Heart right ventricle (tissue), 16 donors: ENCODE measurements at regions of chr9 and their contacts with region 1.

Region 1: DNA sequence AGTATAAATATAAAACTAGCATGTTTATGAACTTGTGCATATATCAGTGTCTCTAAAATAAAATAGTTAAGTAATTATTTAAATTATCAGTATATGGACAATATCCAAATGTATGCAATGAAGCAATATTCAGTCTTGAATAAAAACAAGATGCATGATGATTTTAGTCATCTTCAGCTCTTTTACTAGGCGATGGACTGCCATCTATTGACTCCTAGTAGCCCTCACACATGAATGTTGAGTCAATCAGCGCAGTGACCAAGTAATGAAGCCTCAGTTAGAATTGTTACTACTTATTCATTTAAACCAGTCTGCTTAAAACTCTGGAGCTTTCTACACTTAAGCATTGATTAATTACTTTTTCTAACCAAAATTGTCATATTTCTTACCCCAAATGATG is 92.9 kb upstream of the GRHPR start:
- DNase-seq: no peak
- ATAC-seq: no peak
- H3K4me3 ChIP-seq: no peak overlapping the region
- H3K27ac ChIP-seq: no peak overlapping the region
- H3K4me1 ChIP-seq: peaks cover 0 to 7% (median 0%) of the 10 kb centered on the region in 9 donors
- H3K27me3 ChIP-seq: no peaks in the 10 kb centered on the region
- CTCF ChIP-seq: peak in 7 of 9 donors; percentile 12 to 54 (median 44)

Region 2: GRCh38 chr9:36873247-36873875 is 456.2 kb before region 1 on chr9:
- intact Hi-C with region 1: loop called in 1 of 10 experiments (anchors 10 kb)
- DNase-seq: peak; percentile 45 to 56
- ATAC-seq: peak in 7 of 8 donors; percentile 66 to 81 (median 76)
- H3K4me3 ChIP-seq: no peak overlapping the region
- H3K27ac ChIP-seq: no peak overlapping the region
- H3K4me1 ChIP-seq: no peaks in the 10 kb centered on the region
- H3K27me3 ChIP-seq: peaks cover 4 to 48% (median 21%) of the 10 kb centered on the region in 7 donors
- CTCF ChIP-seq: peak; percentile 62 to 92 (median 85)

Region 3: GRCh38 chr9:37309136-37309535 is 20.4 kb before region 1 on chr9:
- intact Hi-C with region 1: loop called in 1 of 10 experiments (anchors 1 kb)
- DNase-seq: no peak
- ATAC-seq: no peak
- H3K4me3 ChIP-seq: no peak overlapping the region
- H3K27ac ChIP-seq: no peak overlapping the region
- H3K4me1 ChIP-seq: no peaks in the 10 kb centered on the region
- H3K27me3 ChIP-seq: no peaks in the 10 kb centered on the region
- CTCF ChIP-seq: peak in 3 of 9 donors; percentile 20 to 26 (median 22)

Region 4: DNA sequence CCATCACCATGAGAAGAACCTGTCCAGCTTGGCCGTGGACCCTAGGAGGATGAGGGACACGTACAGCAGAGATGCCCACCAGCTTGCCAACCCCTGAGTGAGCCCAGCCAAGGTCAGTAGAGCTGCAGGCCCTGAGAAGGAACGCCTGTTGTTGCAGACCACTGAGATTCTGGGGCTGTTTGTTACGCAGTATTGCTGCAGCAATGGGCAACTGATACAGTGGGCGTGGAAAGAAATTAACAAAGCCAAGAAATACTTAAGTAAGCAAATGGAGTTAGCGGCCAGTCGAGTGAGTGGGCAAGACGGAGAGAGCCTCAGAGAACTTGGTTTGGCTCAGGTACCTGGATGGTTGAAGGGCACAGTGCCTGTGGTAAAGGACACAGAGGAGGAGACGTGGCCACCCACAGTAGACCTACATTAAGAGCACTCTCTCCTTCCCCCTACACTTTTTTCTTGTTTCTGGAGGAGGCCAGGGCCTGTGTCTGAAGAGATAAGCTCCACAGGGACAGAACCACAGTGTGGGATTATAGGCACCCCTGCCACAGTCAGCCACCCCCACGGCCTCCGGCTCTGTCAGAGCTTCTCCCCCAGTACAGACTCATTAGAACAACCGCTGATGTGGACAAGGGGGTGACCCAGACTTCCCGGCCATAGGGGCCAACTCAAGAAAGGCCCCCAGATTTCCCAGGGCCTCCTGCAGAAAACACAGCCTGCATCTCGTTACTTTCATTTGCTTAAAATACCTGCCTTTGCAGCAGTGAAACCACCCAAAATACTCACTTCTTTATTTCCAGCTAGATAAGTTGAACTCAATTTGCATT is 52.8 kb after region 1 on chr9:
- intact Hi-C with region 1: loop called in 1 of 10 experiments (anchors 10 kb)
- DNase-seq: no peak
- ATAC-seq: no peak
- H3K4me3 ChIP-seq: no peak overlapping the region
- H3K27ac ChIP-seq: no peak overlapping the region
- H3K4me1 ChIP-seq: no peaks in the 10 kb centered on the region
- H3K27me3 ChIP-seq: no peaks in the 10 kb centered on the region
- CTCF ChIP-seq: no peak

Region 5: DNA sequence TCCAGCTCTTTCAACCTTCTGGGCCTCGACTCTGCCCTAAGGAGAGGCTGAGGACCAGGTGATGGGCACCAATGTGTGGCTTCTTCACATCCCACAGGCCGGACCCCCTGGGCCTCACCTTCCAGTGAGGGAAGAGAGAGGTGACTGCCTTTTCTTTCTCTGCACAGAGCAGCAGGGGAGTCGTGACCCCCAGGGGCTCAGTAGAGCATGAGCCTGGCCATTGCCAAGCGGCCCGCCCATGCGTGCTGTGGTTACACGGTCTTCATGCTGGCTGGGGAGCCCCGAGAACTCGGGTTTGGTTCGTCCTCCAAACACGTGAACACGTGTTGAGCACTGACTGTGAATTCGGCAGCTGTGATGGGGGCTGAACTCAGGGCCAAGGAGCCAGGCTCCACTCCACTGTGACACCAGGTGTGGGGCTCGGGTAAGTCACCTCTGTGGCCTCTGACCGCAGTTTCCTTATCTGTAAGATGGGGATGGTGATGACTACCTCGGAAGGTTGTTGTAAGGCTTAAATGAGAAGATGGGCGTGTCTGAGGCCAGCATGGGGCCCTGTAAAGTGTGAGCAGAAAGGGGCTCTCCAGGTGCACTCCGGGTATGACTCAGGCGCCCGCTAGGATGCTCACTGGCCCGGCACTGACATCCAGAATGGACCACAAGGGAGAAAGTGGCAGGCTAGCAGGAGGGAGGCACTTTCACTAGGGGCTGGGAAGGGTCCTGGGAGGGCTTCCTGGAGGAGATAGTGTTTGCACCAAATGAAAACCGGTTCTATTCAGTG is 79.5 kb after region 1 on chr9:
- intact Hi-C with region 1: loop called in 1 of 10 experiments (anchors 10 kb)
- DNase-seq: no peak
- ATAC-seq: no peak
- H3K4me3 ChIP-seq: no peak overlapping the region
- H3K27ac ChIP-seq: no peak overlapping the region
- H3K4me1 ChIP-seq: peaks cover 0 to 12% (median 0%) of the 10 kb centered on the region in 9 donors
- H3K27me3 ChIP-seq: no peaks in the 10 kb centered on the region
- CTCF ChIP-seq: no peak